Naive thymus-derived CD4-positive, alpha-beta T cell (primary cell): ENCODE measurements at regions of chr1 and their contacts with region 1.

Region 1: GRCh38 chr1:151594143-151594625 is 17.7 kb upstream of the SNX27 start:
- DNase-seq: peak; percentile 67 to 89 (median 84)
- ATAC-seq: peak; percentile 99
- H3K4me3 ChIP-seq: no peak overlapping the region
- H3K4me3 Mint-ChIP-seq: peak overlapping the region; percentile 18 to 83 (median 77)
- H3K27ac ChIP-seq: no peak overlapping the region
- H3K27ac Mint-ChIP-seq: peak overlapping the region in 8 of 9 donors; percentile 22 to 84 (median 61)
- H3K4me1 ChIP-seq: peaks cover 0 to 6% of the 10 kb centered on the region in 2 donors
- H3K4me1 Mint-ChIP-seq: peaks cover 2 to 17% (median 11%) of the 10 kb centered on the region in 7 donors
- H3K27me3 ChIP-seq: no peaks in the 10 kb centered on the region
- H3K27me3 Mint-ChIP-seq: peaks cover 0 to 27% (median 8%) of the 10 kb centered on the region in 5 donors

Region 2: DNA sequence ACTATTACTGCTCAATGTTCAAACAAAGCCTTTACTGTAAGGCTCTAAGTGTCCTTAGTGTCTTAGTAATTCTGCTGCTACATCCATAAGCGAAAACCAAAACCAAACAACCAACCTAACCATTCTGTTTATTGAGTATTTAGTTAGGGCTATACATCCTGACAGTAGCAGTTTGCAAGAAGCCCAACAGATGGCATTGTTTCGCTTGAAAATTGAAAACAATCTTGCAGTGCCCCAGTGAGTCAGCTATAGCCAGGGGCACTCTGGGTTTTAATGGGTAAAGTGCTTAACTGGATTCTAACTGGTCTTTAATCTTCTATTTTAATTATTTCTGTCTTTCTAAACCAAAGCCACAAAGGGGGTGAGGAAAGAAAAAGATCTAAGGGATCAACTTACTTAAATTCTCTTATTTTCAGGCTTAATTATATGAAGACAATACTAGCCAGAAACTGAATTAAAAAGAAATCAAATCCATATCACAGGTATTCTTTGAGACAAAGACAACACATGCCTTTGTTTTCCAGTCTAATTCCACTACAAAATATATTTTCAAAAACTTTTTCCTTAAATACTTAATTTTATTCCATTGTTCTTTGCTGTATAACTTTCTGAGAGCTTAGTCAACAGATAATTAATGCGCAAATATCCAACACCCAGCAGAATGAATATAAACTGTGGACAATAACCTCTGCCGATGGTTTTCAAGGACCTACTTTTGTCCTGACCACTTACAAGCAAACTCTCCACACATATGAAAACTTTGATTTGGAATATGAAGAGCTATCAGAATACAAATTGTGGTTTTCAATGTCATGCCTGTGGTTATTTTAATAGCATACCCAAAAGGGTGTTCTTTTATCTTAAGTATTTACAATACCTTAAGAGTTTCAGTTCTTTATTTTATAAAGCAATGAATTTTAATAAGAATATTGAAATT is 150.1 kb before region 1 on chr1:
- CTCF ChIA-PET with region 1: interaction called, 6 read pairs
- POLR2A ChIA-PET with region 1: no interaction called
- intact Hi-C with region 1: loop called (anchors 2 to 5 kb)
- DNase-seq: peak; percentile 17 to 73 (median 66)
- ATAC-seq: peak; percentile 98
- H3K4me3 ChIP-seq: no peak overlapping the region
- H3K4me3 Mint-ChIP-seq: peak overlapping the region in 1 of 10 donors; percentile 8
- H3K27ac ChIP-seq: no peak overlapping the region
- H3K27ac Mint-ChIP-seq: peak overlapping the region in 3 of 9 donors; percentile 29 to 61 (median 44)
- H3K4me1 ChIP-seq: peaks cover 0 to 4% of the 10 kb centered on the region in 2 donors
- H3K4me1 Mint-ChIP-seq: peaks cover 24 to 76% (median 60%) of the 10 kb centered on the region in 7 donors
- H3K27me3 ChIP-seq: no peaks in the 10 kb centered on the region
- H3K27me3 Mint-ChIP-seq: no peaks in the 10 kb centered on the region

Region 3: DNA sequence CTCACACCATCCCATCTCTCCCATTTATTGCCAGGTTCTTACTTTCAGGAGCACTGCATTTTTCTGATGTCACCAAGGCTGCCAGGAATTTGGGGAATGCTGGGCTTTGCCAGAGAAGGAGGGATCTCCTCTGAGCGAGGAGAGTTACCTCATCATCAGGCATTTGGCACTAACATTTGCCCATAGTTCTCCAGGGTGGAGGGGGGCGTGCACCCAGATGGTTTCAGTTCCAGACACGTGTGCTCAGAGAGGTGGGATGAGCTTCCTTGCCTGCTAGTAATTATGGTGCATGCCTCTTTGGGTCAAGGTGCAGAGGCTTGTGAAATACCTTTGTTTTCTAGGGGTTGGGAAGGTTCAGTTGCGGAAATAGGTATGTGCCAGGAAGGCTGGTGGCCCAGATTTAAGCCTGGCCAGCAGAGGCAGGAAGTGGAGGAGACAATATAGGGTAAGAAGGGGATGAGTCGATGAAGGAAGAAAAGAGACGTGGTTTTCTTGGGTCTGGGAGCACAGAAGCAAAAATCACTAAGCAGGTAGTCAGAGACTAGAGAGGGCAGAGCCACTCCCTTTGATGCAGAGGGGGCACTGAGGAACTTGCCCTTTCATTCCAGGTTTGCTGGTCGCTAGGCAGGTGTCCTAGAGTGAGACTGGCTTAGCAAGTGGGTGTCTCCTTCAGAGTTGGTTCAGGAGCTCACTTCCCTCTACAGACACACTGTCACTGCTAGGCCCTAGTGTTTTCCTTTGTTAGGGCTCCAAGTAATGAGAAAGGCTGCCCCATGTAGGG is 46.9 kb before region 1 on chr1:
- CTCF ChIA-PET with region 1: no interaction called
- POLR2A ChIA-PET with region 1: no interaction called
- intact Hi-C with region 1: no loop called
- DNase-seq: no peak
- ATAC-seq: no peak
- H3K4me3 ChIP-seq: no peak overlapping the region
- H3K4me3 Mint-ChIP-seq: peak overlapping the region in 2 of 10 donors; percentile 3 to 64
- H3K27ac ChIP-seq: no peak overlapping the region
- H3K27ac Mint-ChIP-seq: peak overlapping the region in 1 of 9 donors; percentile 8
- H3K4me1 ChIP-seq: no peaks in the 10 kb centered on the region
- H3K4me1 Mint-ChIP-seq: peaks cover 0 to 11% (median 6%) of the 10 kb centered on the region in 7 donors
- H3K27me3 ChIP-seq: no peaks in the 10 kb centered on the region
- H3K27me3 Mint-ChIP-seq: peaks cover 0 to 7% (median 0%) of the 10 kb centered on the region in 5 donors

Region 4: DNA sequence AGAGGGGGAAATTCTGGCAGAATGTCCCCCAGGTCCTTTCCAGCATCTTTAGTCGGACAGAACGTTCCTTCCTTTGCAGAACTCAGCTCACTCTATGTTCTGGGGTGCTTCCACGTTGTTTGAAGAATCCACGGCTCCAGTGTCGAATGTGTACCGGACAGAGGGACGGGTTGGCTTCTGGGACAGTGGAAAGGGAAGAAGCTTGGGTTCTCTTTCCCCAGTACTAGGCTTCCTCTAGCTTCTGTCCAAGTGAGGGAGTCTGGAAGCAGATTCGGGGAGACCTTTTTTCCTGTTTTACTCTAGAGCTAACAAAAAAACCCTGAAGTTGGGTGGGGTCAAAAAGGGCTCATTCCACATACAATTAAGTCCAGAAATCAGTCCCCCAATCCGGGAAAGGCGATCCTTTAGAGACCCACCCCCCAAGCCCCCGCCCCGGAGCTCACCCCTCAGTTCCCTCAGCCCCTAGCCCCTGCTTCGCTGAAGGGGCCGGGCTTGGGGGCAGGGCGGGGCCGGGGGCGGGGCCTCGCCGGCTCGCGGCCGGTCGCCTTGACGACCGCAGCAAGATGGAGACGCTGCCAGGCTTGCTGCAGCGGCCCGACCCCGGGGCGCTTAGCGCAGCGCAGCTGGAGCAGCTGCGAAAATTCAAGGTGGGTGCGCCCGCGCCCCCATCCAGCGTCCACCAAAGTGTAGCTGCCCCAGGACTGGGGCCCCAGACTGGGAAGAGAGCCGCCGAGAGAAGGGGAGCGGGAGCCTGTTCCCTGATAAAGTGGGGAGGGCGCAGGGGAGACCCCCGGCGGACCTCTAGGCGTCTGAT is 127.0 kb after region 1 on chr1 and contains the start of gene RIIAD1:
- CTCF ChIA-PET with region 1: interaction called, 4 read pairs
- POLR2A ChIA-PET with region 1: no interaction called
- intact Hi-C with region 1: loop called in 1 of 2 experiments (anchors 5 kb)
- DNase-seq: peak in 8 of 9 donors; percentile 17 to 47 (median 40)
- ATAC-seq: peak; percentile 85
- H3K4me3 ChIP-seq: peak within 1 kb of the TSS; percentile 71
- H3K4me3 Mint-ChIP-seq: peak within 1 kb of the TSS; percentile 71 to 85 (median 83)
- H3K27ac ChIP-seq: no peak within 1 kb of the TSS
- H3K27ac Mint-ChIP-seq: peak within 1 kb of the TSS in 8 of 9 donors; percentile 11 to 85 (median 36)
- H3K4me1 ChIP-seq: peaks cover 9 to 14% of the 10 kb centered on the region in 2 donors
- H3K4me1 Mint-ChIP-seq: peaks cover 17 to 41% (median 26%) of the 10 kb centered on the region in 7 donors
- H3K27me3 ChIP-seq: peaks cover 4 to 6% of the 10 kb centered on the region in 2 donors
- H3K27me3 Mint-ChIP-seq: peaks cover 54 to 88% (median 65%) of the 10 kb centered on the region in 5 donors
- total RNA-seq, gene RIIAD1: not detected

Region 5: DNA sequence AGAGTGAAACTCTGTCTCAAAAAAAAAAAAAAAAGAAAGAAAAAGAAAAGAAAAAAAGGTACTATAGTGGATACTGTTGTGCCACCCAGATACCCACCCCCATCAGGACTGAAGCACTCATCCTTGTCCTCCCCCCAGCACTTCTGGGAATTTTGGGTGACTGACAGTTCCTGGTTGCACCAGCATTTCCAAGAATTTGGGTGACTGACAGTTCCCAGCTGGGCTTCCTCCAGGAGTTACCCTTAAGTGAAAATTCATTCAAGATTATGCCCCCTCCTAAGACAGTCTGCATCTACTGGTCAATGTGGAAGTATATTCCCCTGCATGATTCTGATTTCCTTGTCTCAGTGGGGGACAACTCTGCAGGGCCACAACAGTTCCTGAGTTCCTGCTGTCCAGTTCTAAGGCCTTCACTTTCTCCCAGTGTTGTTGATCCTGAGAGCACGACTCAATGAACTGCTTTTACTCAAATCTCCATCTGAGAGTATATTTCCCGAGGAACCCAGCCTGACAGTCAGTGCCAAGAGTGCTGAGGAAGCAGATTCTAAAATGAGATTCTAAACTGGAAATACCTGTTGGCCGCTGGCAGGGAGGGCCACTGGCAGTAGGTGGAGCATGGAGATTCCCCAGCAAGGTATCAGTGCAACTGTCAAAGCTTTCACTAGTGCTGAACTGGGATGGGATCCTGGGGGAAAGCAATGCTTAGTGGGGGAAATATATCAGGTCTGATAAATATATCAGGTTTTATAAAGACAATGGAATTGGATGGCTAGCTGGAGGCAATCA is 145.6 kb after region 1 on chr1:
- CTCF ChIA-PET with region 1: interaction called, 22 read pairs
- POLR2A ChIA-PET with region 1: no interaction called
- intact Hi-C with region 1: loop called in 1 of 2 experiments (anchors 1 kb)
- DNase-seq: no peak
- ATAC-seq: no peak
- H3K4me3 ChIP-seq: no peak overlapping the region
- H3K4me3 Mint-ChIP-seq: no peak overlapping the region
- H3K27ac ChIP-seq: no peak overlapping the region
- H3K27ac Mint-ChIP-seq: no peak overlapping the region
- H3K4me1 ChIP-seq: no peaks in the 10 kb centered on the region
- H3K4me1 Mint-ChIP-seq: peaks cover 0 to 10% (median 0%) of the 10 kb centered on the region in 7 donors
- H3K27me3 ChIP-seq: no peaks in the 10 kb centered on the region
- H3K27me3 Mint-ChIP-seq: peaks cover 0 to 25% (median 0%) of the 10 kb centered on the region in 5 donors

Region 6: GRCh38 chr1:152001391-152002249 is 407.4 kb after region 1 on chr1:
- CTCF ChIA-PET with region 1: no interaction called
- POLR2A ChIA-PET with region 1: no interaction called
- intact Hi-C with region 1: loop called in 1 of 2 experiments (anchors 1 kb)
- DNase-seq: peak; percentile 51 to 70 (median 67)
- ATAC-seq: peak; percentile 83
- H3K4me3 ChIP-seq: no peak overlapping the region
- H3K4me3 Mint-ChIP-seq: no peak overlapping the region
- H3K27ac ChIP-seq: no peak overlapping the region
- H3K27ac Mint-ChIP-seq: peak overlapping the region in 1 of 9 donors; percentile 62
- H3K4me1 ChIP-seq: no peaks in the 10 kb centered on the region
- H3K4me1 Mint-ChIP-seq: peaks cover 0 to 16% (median 0%) of the 10 kb centered on the region in 7 donors
- H3K27me3 ChIP-seq: no peaks in the 10 kb centered on the region
- H3K27me3 Mint-ChIP-seq: peaks cover 0 to 42% (median 0%) of the 10 kb centered on the region in 5 donors